ENCODE measurements at regions of chr5 and their contacts with region 1.

Region 1: GRCh38 chr5:133287500-133287899 is 235.7 kb downstream of the HSPA4 start:
- DNase-seq: no peak
- H3K4me3 ChIP-seq: no peak overlapping the region
- H3K27me3 ChIP-seq: no peaks in the 10 kb centered on the region
- CTCF ChIP-seq: peak; percentile 44

Region 2: GRCh38 chr5:133111299-133111698 is 176.2 kb before region 1 on chr5:
- CTCF ChIA-PET with region 1: interaction called, 12 read pairs
- POLR2A ChIA-PET with region 1: no interaction called
- DNase-seq: peak; percentile 19
- H3K4me3 ChIP-seq: no peak overlapping the region
- H3K27me3 ChIP-seq: peaks cover 4% of the 10 kb centered on the region; the same call in 1 of the 2 replicates
- CTCF ChIP-seq: peak; percentile 88